ENCODE measurements at regions of chr2 and their contacts with region 1.

Region 1: DNA sequence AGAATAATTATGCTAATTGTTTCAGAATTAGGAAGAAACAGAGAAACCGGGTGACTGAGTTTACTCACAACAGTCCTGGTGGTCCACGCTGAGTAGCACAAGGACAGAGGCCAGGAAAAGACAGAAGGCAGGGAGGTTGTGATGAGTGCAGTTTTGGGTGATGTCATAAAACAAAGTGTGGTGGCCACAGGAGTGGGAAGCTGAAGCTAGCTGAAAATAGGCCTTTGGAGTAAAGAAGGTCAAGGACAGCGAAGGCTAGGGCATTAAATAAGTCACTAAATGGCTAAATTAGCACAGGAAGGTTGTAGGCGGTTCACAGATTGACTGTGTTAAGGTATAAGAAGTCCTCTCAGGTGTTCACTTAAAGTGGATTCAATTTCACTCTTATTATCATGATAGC is 120.9 kb upstream of the TTN start:
- DNase-seq: no peak
- ATAC-seq: no peak

Region 2: DNA sequence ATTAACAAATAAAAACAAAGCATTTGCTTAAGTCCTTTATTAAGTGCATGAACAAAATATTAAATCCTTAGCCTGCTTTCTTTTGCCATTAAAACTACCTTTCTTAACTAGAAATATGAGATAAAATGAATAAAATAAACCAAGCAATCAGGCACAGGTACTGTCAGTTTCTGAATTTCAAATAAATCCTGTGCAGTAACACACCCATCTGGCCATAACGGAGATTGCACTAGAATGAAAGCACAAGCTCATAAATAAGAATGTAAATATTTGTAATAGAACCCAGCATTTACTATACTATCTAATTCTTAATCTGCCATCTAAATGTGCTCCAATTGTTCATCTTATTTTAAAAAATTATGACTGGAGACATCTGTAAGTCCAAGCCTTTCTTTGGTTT is 509.0 kb before region 1 on chr2:
- intact Hi-C with region 1: no loop called
- DNase-seq: no peak
- ATAC-seq: no peak

Region 3: GRCh38 chr2:178734518-178734917 is 193.6 kb before region 1 on chr2:
- intact Hi-C with region 1: no loop called
- DNase-seq: no peak
- ATAC-seq: no peak

Region 4: DNA sequence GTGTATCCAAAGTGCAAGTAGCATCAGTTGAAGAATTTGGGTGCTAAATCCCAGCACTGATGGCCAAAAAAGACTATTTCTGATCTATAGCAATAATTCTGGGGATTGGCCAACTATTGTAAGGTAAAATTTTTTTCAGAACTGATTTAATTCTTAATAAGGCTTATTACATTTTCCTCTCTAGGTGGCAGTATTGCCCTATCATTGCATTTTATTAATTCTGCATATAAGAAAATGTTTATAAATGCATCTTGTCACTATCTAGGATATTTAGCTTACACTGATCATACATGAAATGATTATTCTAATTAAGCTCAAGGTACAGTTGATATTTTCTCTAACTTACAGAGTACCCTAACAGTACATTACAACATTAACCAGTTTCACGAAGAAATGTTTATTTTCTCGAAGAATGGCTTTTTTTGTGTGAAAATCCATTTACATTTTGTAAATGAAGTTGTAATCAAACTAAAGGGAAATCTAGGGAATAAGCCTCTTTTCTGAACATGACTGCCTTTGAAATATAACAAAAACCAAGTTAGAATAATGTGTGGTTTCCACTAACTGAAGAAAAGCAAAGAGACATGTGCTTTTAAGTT is 131.9 kb before region 1 on chr2:
- intact Hi-C with region 1: loop called in 1 of 2 experiments (anchors 5 kb)
- DNase-seq: no peak
- ATAC-seq: no peak

Region 5: GRCh38 chr2:179129574-179130238 is 201.6 kb after region 1 on chr2:
- intact Hi-C with region 1: loop called in 1 of 2 experiments (anchors 10 kb)
- DNase-seq: no peak
- ATAC-seq: no peak